Naive thymus-derived CD4-positive, alpha-beta T cell (primary cell): ENCODE measurements at regions of chr1 and their contacts with region 1.

Region 1: GRCh38 chr1:999725-1000356 is at the start of gene HES4:
- DNase-seq: peak; percentile 44 to 76 (median 60)
- ATAC-seq: peak; percentile 67
- H3K4me3 ChIP-seq: peak within 1 kb of the TSS; percentile 42
- H3K4me3 Mint-ChIP-seq: peak within 1 kb of the TSS; percentile 64 to 87 (median 80)
- H3K27ac ChIP-seq: peak within 1 kb of the TSS; percentile 64
- H3K27ac Mint-ChIP-seq: peak within 1 kb of the TSS in 7 of 9 donors; percentile 46 to 96 (median 90)
- H3K4me1 ChIP-seq: peaks cover 12 to 18% of the 10 kb centered on the region in 2 donors
- H3K4me1 Mint-ChIP-seq: peaks cover 5 to 31% (median 12%) of the 10 kb centered on the region in 7 donors
- H3K27me3 ChIP-seq: peaks cover 3 to 15% of the 10 kb centered on the region in 2 donors
- H3K27me3 Mint-ChIP-seq: peaks cover 8 to 54% (median 17%) of the 10 kb centered on the region in 5 donors
- total RNA-seq, gene HES4: 0.22 to 35.0 (median 18.8) TPM in 3 of 5 experiments, not detected in the others

Region 2: GRCh38 chr1:904310-904950 is 95.4 kb before region 1 on chr1:
- CTCF ChIA-PET with region 1: no interaction called
- POLR2A ChIA-PET with region 1: no interaction called
- intact Hi-C with region 1: no loop called
- DNase-seq: peak; percentile 77 to 93 (median 89)
- ATAC-seq: peak; percentile 94
- H3K4me3 ChIP-seq: no peak overlapping the region
- H3K4me3 Mint-ChIP-seq: peak overlapping the region in 9 of 10 donors; percentile 53 to 81 (median 71)
- H3K27ac ChIP-seq: no peak overlapping the region
- H3K27ac Mint-ChIP-seq: peak overlapping the region in 2 of 9 donors; percentile 14 to 87
- H3K4me1 ChIP-seq: peaks cover 0 to 8% of the 10 kb centered on the region in 2 donors
- H3K4me1 Mint-ChIP-seq: peaks cover 4 to 14% (median 7%) of the 10 kb centered on the region in 7 donors
- H3K27me3 ChIP-seq: peaks cover 0 to 3% of the 10 kb centered on the region in 2 donors
- H3K27me3 Mint-ChIP-seq: peaks cover 16 to 47% (median 35%) of the 10 kb centered on the region in 5 donors

Region 3: DNA sequence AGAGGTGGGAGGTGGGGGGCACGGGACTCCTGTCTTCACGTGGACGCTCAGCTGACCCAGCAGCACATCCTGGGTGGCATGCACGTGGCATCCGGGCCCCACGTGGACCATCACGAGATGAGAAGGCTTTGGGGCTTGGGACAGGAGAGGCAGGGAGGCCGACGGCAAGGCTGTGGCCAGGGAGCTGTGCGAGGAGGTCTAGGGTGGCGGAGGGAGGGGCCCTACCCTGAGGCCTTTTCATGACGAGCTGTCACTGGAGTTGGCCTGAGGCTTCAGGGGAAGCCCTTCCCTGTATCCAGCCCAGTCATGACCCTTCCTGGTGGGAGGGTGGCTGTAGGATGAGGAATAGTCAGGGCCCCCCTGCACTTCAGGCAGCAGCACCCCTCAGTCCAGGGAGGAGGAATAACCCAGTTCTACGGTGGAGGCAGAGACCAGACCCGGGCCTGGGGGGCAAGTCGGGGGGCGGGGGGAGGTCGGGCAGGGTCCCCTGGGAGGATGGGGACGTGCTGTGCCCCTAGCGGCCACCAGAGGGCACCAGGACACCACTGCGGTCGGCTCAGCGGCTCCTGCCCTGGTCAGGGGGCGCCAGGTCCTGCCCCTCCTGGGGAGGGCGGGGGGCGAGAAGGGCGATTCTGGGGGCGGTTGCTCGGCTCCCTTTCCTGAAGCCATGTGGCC is 15.9 kb before region 1 on chr1:
- CTCF ChIA-PET with region 1: interaction called, 15 read pairs
- POLR2A ChIA-PET with region 1: no interaction called
- intact Hi-C with region 1: loop called in 1 of 2 experiments (anchors 1 kb)
- DNase-seq: peak in 7 of 9 donors; percentile 47 to 71 (median 62)
- ATAC-seq: peak; percentile 85
- H3K4me3 ChIP-seq: no peak overlapping the region
- H3K4me3 Mint-ChIP-seq: no peak overlapping the region
- H3K27ac ChIP-seq: no peak overlapping the region
- H3K27ac Mint-ChIP-seq: no peak overlapping the region
- H3K4me1 ChIP-seq: no peaks in the 10 kb centered on the region
- H3K4me1 Mint-ChIP-seq: peaks cover 0 to 2% (median 0%) of the 10 kb centered on the region in 7 donors
- H3K27me3 ChIP-seq: no peaks in the 10 kb centered on the region
- H3K27me3 Mint-ChIP-seq: peaks cover 7 to 38% (median 26%) of the 10 kb centered on the region in 5 donors

Region 4: DNA sequence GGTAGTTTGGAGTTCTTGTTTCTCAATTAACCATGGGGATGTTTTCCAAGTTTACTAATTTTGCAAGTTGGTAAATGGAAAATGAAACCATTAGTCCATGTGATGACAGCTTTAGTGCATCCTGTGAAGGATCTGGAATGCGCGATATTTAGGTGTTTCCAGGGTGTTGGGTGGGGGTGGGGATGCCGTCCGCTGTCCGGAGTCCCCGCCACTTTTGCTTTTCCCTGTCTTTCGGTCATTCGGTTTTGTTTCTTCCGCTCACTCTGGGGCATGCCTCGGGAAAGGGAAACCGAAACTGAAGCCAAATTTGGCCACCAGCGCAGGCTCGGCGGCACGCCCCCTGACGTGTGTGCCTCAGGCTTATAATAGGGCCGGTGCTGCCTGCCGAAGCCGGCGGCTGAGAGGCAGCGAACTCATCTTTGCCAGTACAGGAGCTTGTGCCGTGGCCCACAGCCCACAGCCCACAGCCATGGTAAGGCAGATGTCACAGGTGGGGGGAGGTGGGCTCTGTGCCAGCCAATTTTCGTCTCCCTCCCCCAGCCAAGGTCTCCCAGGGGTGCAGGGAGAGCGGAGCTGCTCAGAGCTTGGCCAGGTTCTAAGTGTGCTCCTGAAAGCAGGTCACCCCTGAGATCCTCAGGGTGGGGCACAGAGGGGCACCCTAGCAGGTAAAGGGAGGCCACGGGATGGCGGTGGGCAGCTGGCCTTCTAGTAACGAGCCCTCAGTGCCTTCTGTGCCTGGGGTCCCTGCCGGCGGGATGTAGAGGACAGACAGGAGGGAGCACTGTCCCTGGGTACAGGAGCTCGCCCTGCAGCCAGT is 13.5 kb after region 1 on chr1 and contains the start of gene ISG15:
- CTCF ChIA-PET with region 1: interaction called, 4 read pairs
- POLR2A ChIA-PET with region 1: interaction called, 10 read pairs
- intact Hi-C with region 1: loop called (anchors 1 kb)
- DNase-seq: peak; percentile 73 to 90 (median 85)
- ATAC-seq: peak; percentile 98
- H3K4me3 ChIP-seq: peak within 1 kb of the TSS; percentile 95
- H3K4me3 Mint-ChIP-seq: peak within 1 kb of the TSS; percentile 89 to 100 (median 96)
- H3K27ac ChIP-seq: peak within 1 kb of the TSS; percentile 83
- H3K27ac Mint-ChIP-seq: peak within 1 kb of the TSS; percentile 96 to 100 (median 99)
- H3K4me1 ChIP-seq: peaks cover 13 to 18% of the 10 kb centered on the region in 2 donors
- H3K4me1 Mint-ChIP-seq: peaks cover 19 to 35% (median 29%) of the 10 kb centered on the region in 7 donors
- H3K27me3 ChIP-seq: no peaks in the 10 kb centered on the region
- H3K27me3 Mint-ChIP-seq: peaks cover 0 to 4% (median 1%) of the 10 kb centered on the region in 5 donors
- total RNA-seq, gene ISG15: 17.4 to 227 (median 25.4) TPM

Region 5: DNA sequence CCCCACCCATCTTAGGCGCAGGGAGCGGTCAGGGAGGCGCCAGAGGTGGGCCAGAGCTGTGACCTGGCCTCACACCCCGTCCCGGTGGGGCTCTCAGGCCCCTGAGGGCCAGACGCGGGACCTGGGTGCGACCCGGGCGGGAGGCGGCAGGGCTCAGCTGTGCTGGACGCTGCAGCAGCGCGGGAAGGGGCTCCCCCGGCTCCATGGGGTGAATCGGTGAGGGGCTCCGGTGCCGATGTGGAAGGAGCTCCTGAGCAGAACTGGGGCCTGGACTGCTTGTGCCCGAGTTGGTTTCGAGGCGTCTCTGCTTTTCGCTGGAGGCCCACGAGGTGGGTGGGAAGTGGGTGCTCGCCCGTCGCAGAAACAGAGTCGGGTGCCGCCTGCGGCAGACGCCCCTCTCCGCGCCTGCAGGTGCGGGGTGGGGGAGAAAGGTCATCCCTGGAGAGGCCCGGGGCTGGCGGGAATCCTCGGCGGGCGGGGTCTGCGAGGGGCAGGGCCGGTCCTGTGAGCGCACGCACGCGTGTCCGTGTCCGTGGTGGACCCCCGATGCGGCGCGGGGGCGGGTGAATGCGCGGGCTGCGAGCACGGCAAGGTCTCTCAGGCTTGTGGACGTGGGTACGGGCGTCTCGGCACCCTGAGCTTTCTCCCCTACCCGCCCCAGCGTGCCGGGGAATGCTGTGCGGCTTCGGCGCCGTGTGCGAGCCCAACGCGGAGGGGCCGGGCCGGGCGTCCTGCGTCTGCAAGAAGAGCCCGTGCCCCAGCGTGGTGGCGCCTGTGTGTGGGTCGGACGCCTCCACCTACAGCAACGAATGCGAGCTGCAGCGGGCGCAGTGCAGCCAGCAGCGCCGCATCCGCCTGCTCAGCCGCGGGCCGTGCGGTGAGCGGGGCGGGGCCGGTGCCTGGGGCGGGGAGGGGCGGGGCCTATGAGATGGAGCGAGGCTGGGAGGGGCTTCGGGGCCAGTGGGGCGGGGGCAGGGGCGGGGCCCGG is 40.5 kb after region 1 on chr1:
- CTCF ChIA-PET with region 1: no interaction called
- POLR2A ChIA-PET with region 1: no interaction called
- intact Hi-C with region 1: loop called in 1 of 2 experiments (anchors 1 kb)
- DNase-seq: peak; percentile 69 to 84 (median 81)
- ATAC-seq: peak; percentile 93
- H3K4me3 ChIP-seq: peak overlapping the region; percentile 52
- H3K4me3 Mint-ChIP-seq: peak overlapping the region; percentile 71 to 86 (median 80)
- H3K27ac ChIP-seq: peak overlapping the region; percentile 35
- H3K27ac Mint-ChIP-seq: peak overlapping the region in 7 of 9 donors; percentile 25 to 56 (median 41)
- H3K4me1 ChIP-seq: peaks cover 6 to 14% of the 10 kb centered on the region in 2 donors
- H3K4me1 Mint-ChIP-seq: peaks cover 5 to 18% (median 15%) of the 10 kb centered on the region in 7 donors
- H3K27me3 ChIP-seq: no peaks in the 10 kb centered on the region
- H3K27me3 Mint-ChIP-seq: peaks cover 3 to 27% (median 5%) of the 10 kb centered on the region in 5 donors